AG04450 (cell line): ENCODE measurements at regions of chr17 and their contacts with region 1.

Region 1: DNA sequence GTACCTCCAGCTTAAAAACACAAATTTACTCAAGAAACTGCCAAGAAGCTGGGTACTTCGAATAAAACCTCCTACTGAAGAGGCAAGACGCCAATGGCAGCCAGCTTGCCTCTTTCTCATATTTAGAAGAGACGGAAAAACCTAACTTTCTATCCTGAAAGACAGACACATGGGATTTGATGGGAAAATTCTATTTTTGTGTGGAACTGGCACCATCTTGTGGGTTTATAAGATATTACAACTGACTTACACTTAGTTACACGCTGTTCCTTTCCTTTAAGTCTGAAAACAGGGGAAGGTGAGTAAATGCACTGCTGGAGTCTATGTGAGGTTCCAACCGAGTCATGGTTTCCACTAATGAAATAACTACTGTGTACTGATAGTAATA is 10.3 kb downstream of the ZNF18 start:
- DNase-seq: peak; percentile 13
- H3K4me3 ChIP-seq: no peak overlapping the region
- H3K27ac ChIP-seq: no peak overlapping the region
- H3K27me3 ChIP-seq: no peaks in the 10 kb centered on the region
- CTCF ChIP-seq: peak; percentile 61

Region 2: GRCh38 chr17:10875979-10876555 is 1110.9 kb before region 1 on chr17:
- CTCF ChIA-PET with region 1: interaction called, 28 read pairs
- POLR2A ChIA-PET with region 1: no interaction called
- DNase-seq: no peak
- H3K4me3 ChIP-seq: no peak overlapping the region
- H3K27ac ChIP-seq: no peak overlapping the region
- H3K27me3 ChIP-seq: no peaks in the 10 kb centered on the region
- CTCF ChIP-seq: peak; percentile 50